ENCODE measurements at regions of chr1 and their contacts with region 1.

Region 1: GRCh38 chr1:98053471-98054366 is 132.9 kb upstream of the DPYD start:
- H3K4me3 Mint-ChIP-seq: peak overlapping the region; percentile 87
- H3K27ac Mint-ChIP-seq: peak overlapping the region; percentile 50
- H3K4me1 Mint-ChIP-seq: peaks cover 28% of the 10 kb centered on the region
- H3K27me3 Mint-ChIP-seq: peaks cover 59% of the 10 kb centered on the region

Region 2: GRCh38 chr1:96966536-96967138 is 1087.1 kb before region 1 on chr1:
- intact Hi-C with region 1: loop called (anchors 1 kb)
- H3K4me3 Mint-ChIP-seq: no peak overlapping the region
- H3K27ac Mint-ChIP-seq: no peak overlapping the region
- H3K4me1 Mint-ChIP-seq: no peaks in the 10 kb centered on the region
- H3K27me3 Mint-ChIP-seq: peaks cover 5% of the 10 kb centered on the region

Region 3: DNA sequence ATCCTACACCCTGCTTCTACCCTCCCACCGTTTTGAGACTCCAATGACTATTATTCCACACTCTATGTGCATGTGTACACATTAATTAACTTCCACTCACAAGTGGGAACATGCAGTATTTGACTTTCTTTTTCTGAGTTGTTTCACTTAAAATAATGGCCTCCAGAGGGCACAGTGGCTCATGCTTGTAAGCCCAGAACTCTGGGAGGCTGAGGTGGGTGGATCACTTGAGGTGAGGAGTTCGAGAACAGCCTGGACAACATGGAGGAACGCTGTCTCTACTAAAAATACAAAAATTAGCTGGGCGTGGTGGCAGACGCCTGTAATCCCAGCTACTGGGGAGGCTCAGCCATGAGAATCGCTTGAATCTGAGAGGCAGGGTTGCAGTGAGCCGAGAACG is 867.3 kb before region 1 on chr1:
- intact Hi-C with region 1: loop called (anchors 5 kb)
- H3K4me3 Mint-ChIP-seq: no peak overlapping the region
- H3K27ac Mint-ChIP-seq: no peak overlapping the region
- H3K4me1 Mint-ChIP-seq: no peaks in the 10 kb centered on the region
- H3K27me3 Mint-ChIP-seq: no peaks in the 10 kb centered on the region

Region 4: DNA sequence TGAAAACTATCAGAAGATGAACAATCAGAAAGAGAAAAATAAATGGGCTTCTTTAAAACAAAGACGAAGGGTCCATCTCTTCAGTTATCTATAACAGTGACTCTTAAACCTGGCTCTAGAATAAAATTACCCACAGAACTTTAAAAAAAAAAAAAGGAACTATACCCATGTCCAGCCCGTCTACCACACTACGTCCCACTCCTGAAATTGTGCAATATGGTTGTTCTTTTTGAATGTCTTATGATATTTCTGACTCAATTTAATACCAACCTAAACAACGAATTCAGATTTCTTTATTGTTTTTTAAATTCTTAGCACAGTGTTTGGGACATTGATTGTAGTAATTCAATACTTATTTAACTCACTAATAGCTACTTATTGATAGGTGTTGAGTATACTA is 379.2 kb before region 1 on chr1:
- intact Hi-C with region 1: loop called (anchors 5 kb)
- H3K4me3 Mint-ChIP-seq: no peak overlapping the region
- H3K27ac Mint-ChIP-seq: no peak overlapping the region
- H3K4me1 Mint-ChIP-seq: peaks cover 15% of the 10 kb centered on the region
- H3K27me3 Mint-ChIP-seq: no peaks in the 10 kb centered on the region

Region 5: GRCh38 chr1:97920832-97921571 is 132.7 kb before region 1 on chr1 and contains the start of gene DPYD:
- intact Hi-C with region 1: loop called (anchors 5 kb)
- H3K4me3 Mint-ChIP-seq: peak within 1 kb of the TSS; percentile 95
- H3K27ac Mint-ChIP-seq: peak within 1 kb of the TSS; percentile 97
- H3K4me1 Mint-ChIP-seq: peaks cover 31% of the 10 kb centered on the region
- H3K27me3 Mint-ChIP-seq: no peaks in the 10 kb centered on the region

Region 6: DNA sequence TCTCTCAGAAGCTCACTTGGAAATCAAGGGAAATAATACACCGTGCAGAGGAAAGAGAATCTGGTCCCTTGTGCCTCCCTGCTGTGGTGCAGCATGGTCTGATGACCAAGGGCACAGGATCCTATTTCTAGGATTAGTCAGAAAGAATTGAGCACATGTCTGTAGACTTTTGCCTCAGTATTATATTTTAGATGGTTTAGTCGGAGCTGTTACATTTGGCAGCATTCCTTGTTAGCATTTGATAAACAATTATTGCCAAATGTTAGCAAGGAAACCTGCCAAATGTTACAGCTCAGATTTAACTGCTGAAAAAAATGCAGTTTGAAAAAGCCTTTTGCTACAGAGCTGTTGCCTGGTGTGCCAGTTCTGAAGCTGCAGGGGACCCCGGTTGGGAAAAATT is 50.6 kb after region 1 on chr1:
- intact Hi-C with region 1: no loop called
- H3K4me3 Mint-ChIP-seq: no peak overlapping the region
- H3K27ac Mint-ChIP-seq: no peak overlapping the region
- H3K4me1 Mint-ChIP-seq: no peaks in the 10 kb centered on the region
- H3K27me3 Mint-ChIP-seq: no peaks in the 10 kb centered on the region

Measured in dendritic cell treated with granulocyte-macrophage colony-stimulating factor and Interleukin-4, amounts not matched to agents 40 ng/mL and 50 ng/mL, for 4 days (primary cell).